Activated T-helper 1 cell treated with anti-CD3 and anti-CD28 coated beads, Interleukin-12 subunit alpha, Interleukin-12 subunit beta, Interleukin-2, Interleukin-4 antibody, amounts not matched to agents 30 ng/mL and 10 ng/mL and 1 ng/mL, durations not matched to agents 14 hours and 24 hours and 36 hours (primary cell): ENCODE measurements at regions of chr3 and their contacts with region 1.

Region 1: DNA sequence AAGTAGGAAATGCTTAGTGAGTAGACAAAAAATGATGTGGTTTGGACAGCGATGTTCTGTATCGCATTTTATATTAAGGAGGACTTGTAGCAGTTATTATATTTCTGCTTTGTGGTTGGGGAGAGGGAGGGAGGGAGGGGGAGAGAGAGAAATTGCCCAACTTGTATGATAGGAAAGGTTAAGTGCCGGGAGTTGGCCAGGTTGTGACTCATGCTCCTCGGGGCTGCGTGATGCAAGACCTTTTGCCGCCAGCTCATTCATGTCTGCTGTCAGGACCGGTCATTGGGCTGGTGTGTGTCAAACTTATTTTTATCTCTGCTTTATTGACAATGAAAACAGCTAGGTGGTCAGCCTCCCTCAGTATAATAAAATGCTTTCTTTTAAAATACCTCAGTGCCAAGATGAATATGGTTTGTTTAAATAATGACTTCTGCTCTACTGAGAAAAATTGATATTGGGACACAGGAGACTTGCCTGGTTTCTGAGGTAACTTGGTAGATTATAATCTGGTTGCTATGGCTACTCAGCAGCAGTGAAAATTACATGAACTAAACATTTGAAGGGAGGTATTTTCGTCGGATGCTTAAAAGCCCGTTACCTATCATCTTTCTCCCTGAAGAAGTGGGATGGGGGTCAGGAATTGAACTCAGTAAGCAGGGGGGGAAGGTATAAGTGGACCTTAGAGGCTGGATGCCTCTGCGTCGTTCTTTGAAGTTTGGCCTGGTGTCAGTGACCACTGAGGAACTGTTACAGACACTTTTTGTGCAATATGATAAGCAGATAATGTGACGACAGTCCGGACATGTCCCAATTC is 90.7 kb downstream of the FNDC3B start:
- DNase-seq: no peak
- H3K4me3 Mint-ChIP-seq: peak overlapping the region; percentile 34
- H3K27ac Mint-ChIP-seq: peak overlapping the region; percentile 83
- H3K4me1 Mint-ChIP-seq: peaks cover 67% of the 10 kb centered on the region
- H3K27me3 Mint-ChIP-seq: no peaks in the 10 kb centered on the region

Region 2: GRCh38 chr3:172145031-172145686 is 15.1 kb after region 1 on chr3:
- intact Hi-C with region 1: loop called (anchors 2 kb)
- DNase-seq: no peak
- H3K4me3 Mint-ChIP-seq: no peak overlapping the region
- H3K27ac Mint-ChIP-seq: no peak overlapping the region
- H3K4me1 Mint-ChIP-seq: peaks cover 53% of the 10 kb centered on the region
- H3K27me3 Mint-ChIP-seq: no peaks in the 10 kb centered on the region

Region 3: GRCh38 chr3:172209333-172210321 is 79.5 kb after region 1 on chr3:
- intact Hi-C with region 1: loop called (anchors 5 kb)
- DNase-seq: no peak
- H3K4me3 Mint-ChIP-seq: no peak overlapping the region
- H3K27ac Mint-ChIP-seq: no peak overlapping the region
- H3K4me1 Mint-ChIP-seq: peaks cover 15% of the 10 kb centered on the region
- H3K27me3 Mint-ChIP-seq: no peaks in the 10 kb centered on the region